ENCODE measurements at regions of chrX and their contacts with region 1.

Region 1: GRCh38 chrX:56826020-56826419 is 97.0 kb downstream of the NBDY start:
- DNase-seq: no peak
- ATAC-seq: no peak
- H3K4me3 ChIP-seq: no peak overlapping the region
- H3K4me3 Mint-ChIP-seq: no peak overlapping the region
- H3K27ac ChIP-seq: no peak overlapping the region
- H3K27ac Mint-ChIP-seq: no peak overlapping the region
- H3K4me1 ChIP-seq: no peaks in the 10 kb centered on the region
- H3K4me1 Mint-ChIP-seq: no peaks in the 10 kb centered on the region
- H3K27me3 ChIP-seq: no peaks in the 10 kb centered on the region
- H3K27me3 Mint-ChIP-seq: no peaks in the 10 kb centered on the region
- CTCF ChIP-seq: no peak

Region 2: DNA sequence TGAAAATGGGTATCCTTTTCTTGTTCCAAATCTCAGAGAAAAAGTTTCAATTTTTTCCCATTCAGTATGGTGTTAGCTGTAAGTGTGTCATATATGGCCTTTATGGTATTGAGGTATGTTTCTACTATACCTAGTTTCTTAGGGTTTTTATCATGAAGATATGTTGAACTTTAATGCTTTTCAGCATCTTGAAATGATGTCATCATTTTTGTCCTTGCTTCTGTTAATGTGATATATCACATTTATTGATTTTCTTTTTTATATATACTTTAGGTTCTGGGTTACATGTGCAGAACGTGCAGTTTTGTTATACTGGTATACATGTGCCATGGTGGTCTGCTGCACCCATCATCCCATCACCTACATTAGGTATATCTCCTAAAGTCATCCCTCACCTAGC is 1157.9 kb before region 1 on chrX:
- CTCF ChIA-PET with region 1: no interaction called
- POLR2A ChIA-PET with region 1: no interaction called
- intact Hi-C with region 1: no loop called
- DNase-seq: no peak
- ATAC-seq: no peak
- H3K4me3 ChIP-seq: no peak overlapping the region
- H3K4me3 Mint-ChIP-seq: no peak overlapping the region
- H3K27ac ChIP-seq: no peak overlapping the region
- H3K27ac Mint-ChIP-seq: no peak overlapping the region
- H3K4me1 ChIP-seq: no peaks in the 10 kb centered on the region
- H3K4me1 Mint-ChIP-seq: no peaks in the 10 kb centered on the region
- H3K27me3 ChIP-seq: no peaks in the 10 kb centered on the region
- H3K27me3 Mint-ChIP-seq: no peaks in the 10 kb centered on the region
- CTCF ChIP-seq: no peak

Region 3: GRCh38 chrX:56499372-56499771 is 326.6 kb before region 1 on chrX:
- CTCF ChIA-PET with region 1: no interaction called
- POLR2A ChIA-PET with region 1: no interaction called
- intact Hi-C with region 1: no loop called
- DNase-seq: no peak
- ATAC-seq: no peak
- H3K4me3 ChIP-seq: no peak overlapping the region
- H3K4me3 Mint-ChIP-seq: no peak overlapping the region
- H3K27ac ChIP-seq: no peak overlapping the region
- H3K27ac Mint-ChIP-seq: no peak overlapping the region
- H3K4me1 ChIP-seq: no peaks in the 10 kb centered on the region
- H3K4me1 Mint-ChIP-seq: no peaks in the 10 kb centered on the region
- H3K27me3 ChIP-seq: no peaks in the 10 kb centered on the region
- H3K27me3 Mint-ChIP-seq: no peaks in the 10 kb centered on the region
- CTCF ChIP-seq: no peak

Region 4: GRCh38 chrX:56661193-56661592 is 164.8 kb before region 1 on chrX:
- CTCF ChIA-PET with region 1: no interaction called
- POLR2A ChIA-PET with region 1: no interaction called
- intact Hi-C with region 1: no loop called
- DNase-seq: no peak
- ATAC-seq: no peak
- H3K4me3 ChIP-seq: no peak overlapping the region
- H3K4me3 Mint-ChIP-seq: no peak overlapping the region
- H3K27ac ChIP-seq: no peak overlapping the region
- H3K27ac Mint-ChIP-seq: no peak overlapping the region
- H3K4me1 ChIP-seq: no peaks in the 10 kb centered on the region
- H3K4me1 Mint-ChIP-seq: no peaks in the 10 kb centered on the region
- H3K27me3 ChIP-seq: no peaks in the 10 kb centered on the region
- H3K27me3 Mint-ChIP-seq: no peaks in the 10 kb centered on the region
- CTCF ChIP-seq: no peak

Region 5: GRCh38 chrX:56882581-56882980 is 56.6 kb after region 1 on chrX:
- CTCF ChIA-PET with region 1: no interaction called
- POLR2A ChIA-PET with region 1: no interaction called
- intact Hi-C with region 1: loop called in 1 of 2 experiments (anchors 10 kb)
- DNase-seq: no peak
- ATAC-seq: no peak
- H3K4me3 ChIP-seq: no peak overlapping the region
- H3K4me3 Mint-ChIP-seq: no peak overlapping the region
- H3K27ac ChIP-seq: no peak overlapping the region
- H3K27ac Mint-ChIP-seq: no peak overlapping the region
- H3K4me1 ChIP-seq: no peaks in the 10 kb centered on the region
- H3K4me1 Mint-ChIP-seq: no peaks in the 10 kb centered on the region
- H3K27me3 ChIP-seq: no peaks in the 10 kb centered on the region
- H3K27me3 Mint-ChIP-seq: peaks cover 4% of the 10 kb centered on the region
- CTCF ChIP-seq: no peak

Region 6: DNA sequence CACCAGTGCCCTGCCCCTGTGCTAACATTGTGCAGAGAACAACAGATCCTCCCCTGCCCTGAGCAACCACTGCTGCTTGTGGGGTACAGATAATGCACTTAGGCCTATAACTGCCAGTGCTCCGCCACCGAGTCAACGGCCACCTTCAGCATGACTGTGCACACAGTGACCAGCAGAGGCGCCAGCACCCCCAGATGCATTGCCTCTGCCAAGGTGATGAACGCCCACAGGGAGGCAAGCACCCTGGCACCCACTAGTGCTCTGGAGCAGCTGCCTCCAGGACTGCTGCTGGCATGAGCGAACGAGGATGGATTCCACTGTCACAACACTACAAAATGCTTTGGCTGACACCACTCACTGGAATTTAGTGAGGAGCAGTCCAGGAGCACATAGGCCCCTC is 257.1 kb after region 1 on chrX:
- CTCF ChIA-PET with region 1: no interaction called
- POLR2A ChIA-PET with region 1: no interaction called
- intact Hi-C with region 1: no loop called
- DNase-seq: no peak
- ATAC-seq: no peak
- H3K4me3 ChIP-seq: no peak overlapping the region
- H3K4me3 Mint-ChIP-seq: no peak overlapping the region
- H3K27ac ChIP-seq: no peak overlapping the region
- H3K27ac Mint-ChIP-seq: no peak overlapping the region
- H3K4me1 ChIP-seq: no peaks in the 10 kb centered on the region
- H3K4me1 Mint-ChIP-seq: no peaks in the 10 kb centered on the region
- H3K27me3 ChIP-seq: no peaks in the 10 kb centered on the region
- H3K27me3 Mint-ChIP-seq: no peaks in the 10 kb centered on the region
- CTCF ChIP-seq: no peak

Measured in CD8-positive, alpha-beta T cell (primary cell).